ENCODE measurements at regions of chr5 and their contacts with region 1.

Region 1: GRCh38 chr5:124902097-124902821 is 155.8 kb upstream of the ZNF608 start:
- DNase-seq: peak in 1 of 9 donors; percentile 24
- ATAC-seq: peak; percentile 95
- H3K4me3 ChIP-seq: no peak overlapping the region
- H3K4me3 Mint-ChIP-seq: peak overlapping the region in 1 of 10 donors; percentile 31
- H3K27ac ChIP-seq: no peak overlapping the region
- H3K27ac Mint-ChIP-seq: peak overlapping the region in 1 of 9 donors; percentile 44
- H3K4me1 ChIP-seq: no peaks in the 10 kb centered on the region
- H3K4me1 Mint-ChIP-seq: peaks cover 0 to 13% (median 0%) of the 10 kb centered on the region in 7 donors
- H3K27me3 ChIP-seq: no peaks in the 10 kb centered on the region
- H3K27me3 Mint-ChIP-seq: peaks cover 0 to 7% (median 3%) of the 10 kb centered on the region in 5 donors

Region 2: GRCh38 chr5:124034963-124035362 is 867.3 kb before region 1 on chr5:
- CTCF ChIA-PET with region 1: no interaction called
- POLR2A ChIA-PET with region 1: no interaction called
- intact Hi-C with region 1: no loop called
- DNase-seq: no peak
- ATAC-seq: no peak
- H3K4me3 ChIP-seq: no peak overlapping the region
- H3K4me3 Mint-ChIP-seq: no peak overlapping the region
- H3K27ac ChIP-seq: no peak overlapping the region
- H3K27ac Mint-ChIP-seq: no peak overlapping the region
- H3K4me1 ChIP-seq: no peaks in the 10 kb centered on the region
- H3K4me1 Mint-ChIP-seq: no peaks in the 10 kb centered on the region
- H3K27me3 ChIP-seq: no peaks in the 10 kb centered on the region
- H3K27me3 Mint-ChIP-seq: no peaks in the 10 kb centered on the region

Region 3: GRCh38 chr5:124812754-124813358 is 89.4 kb before region 1 on chr5:
- CTCF ChIA-PET with region 1: no interaction called
- POLR2A ChIA-PET with region 1: no interaction called
- intact Hi-C with region 1: no loop called
- DNase-seq: no peak
- ATAC-seq: no peak
- H3K4me3 ChIP-seq: no peak overlapping the region
- H3K4me3 Mint-ChIP-seq: no peak overlapping the region
- H3K27ac ChIP-seq: no peak overlapping the region
- H3K27ac Mint-ChIP-seq: no peak overlapping the region
- H3K4me1 ChIP-seq: no peaks in the 10 kb centered on the region
- H3K4me1 Mint-ChIP-seq: no peaks in the 10 kb centered on the region
- H3K27me3 ChIP-seq: no peaks in the 10 kb centered on the region
- H3K27me3 Mint-ChIP-seq: no peaks in the 10 kb centered on the region

Region 4: DNA sequence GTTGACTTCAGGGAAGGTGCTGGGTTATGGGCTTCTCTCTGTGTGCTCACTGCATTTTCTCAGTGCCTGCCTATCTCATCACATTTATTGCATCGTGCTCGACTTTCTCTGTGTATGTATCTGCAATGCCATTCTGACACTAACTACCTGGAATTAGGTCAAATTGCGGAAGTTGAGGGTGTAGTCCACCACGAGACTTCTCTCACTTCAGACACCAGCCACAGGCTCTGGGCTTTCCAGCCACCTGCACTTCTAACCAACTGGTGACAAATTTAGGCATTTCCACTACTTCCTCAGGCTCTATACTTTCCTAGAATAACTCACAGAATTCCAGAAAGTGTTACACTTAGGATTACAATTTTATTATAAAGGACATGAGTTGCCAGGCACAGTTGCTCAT is 32.8 kb after region 1 on chr5:
- CTCF ChIA-PET with region 1: no interaction called
- POLR2A ChIA-PET with region 1: no interaction called
- intact Hi-C with region 1: loop called in 1 of 2 experiments (anchors 2 kb)
- DNase-seq: no peak
- ATAC-seq: no peak
- H3K4me3 ChIP-seq: no peak overlapping the region
- H3K4me3 Mint-ChIP-seq: peak overlapping the region in 1 of 10 donors; percentile 18
- H3K27ac ChIP-seq: no peak overlapping the region
- H3K27ac Mint-ChIP-seq: peak overlapping the region in 1 of 9 donors; percentile 73
- H3K4me1 ChIP-seq: no peaks in the 10 kb centered on the region
- H3K4me1 Mint-ChIP-seq: peaks cover 0 to 8% (median 0%) of the 10 kb centered on the region in 7 donors
- H3K27me3 ChIP-seq: no peaks in the 10 kb centered on the region
- H3K27me3 Mint-ChIP-seq: no peaks in the 10 kb centered on the region